ENCODE measurements at regions of chr4 and their contacts with region 1.

Region 1: DNA sequence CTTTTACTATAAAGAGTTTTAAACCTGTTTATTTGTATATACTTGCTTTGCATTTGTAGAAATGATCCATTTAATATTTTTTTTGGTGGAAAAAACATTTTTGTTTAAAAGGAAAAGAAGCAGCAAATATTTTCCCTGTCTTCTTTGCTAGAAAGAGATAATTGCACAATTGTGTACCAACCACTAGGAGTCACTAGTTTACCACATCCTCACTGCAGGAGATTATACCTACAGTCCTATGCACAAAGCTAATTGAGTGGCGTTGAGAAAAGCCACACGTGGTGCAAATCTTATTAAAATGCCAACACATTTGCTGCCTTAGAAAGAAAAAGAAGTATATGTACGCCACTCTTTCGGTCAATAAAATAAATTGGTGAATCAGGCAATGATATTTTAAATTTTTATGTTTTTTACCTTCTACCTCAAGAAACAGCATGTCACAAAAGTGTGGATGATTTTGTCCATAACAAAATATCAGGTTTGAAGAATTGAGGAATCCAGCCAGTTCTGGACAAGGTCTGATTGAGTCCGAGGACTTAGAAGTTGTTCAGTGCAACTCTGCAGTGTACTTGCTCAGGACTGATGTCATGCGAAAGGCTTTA is 102.9 kb downstream of the GRXCR1 start:
- DNase-seq: peak; percentile 49
- ATAC-seq: peak; percentile 63
- H3K4me3 ChIP-seq: no peak overlapping the region
- H3K27ac ChIP-seq: no peak overlapping the region
- H3K4me1 ChIP-seq: no peaks in the 10 kb centered on the region
- H3K27me3 ChIP-seq: no peaks in the 10 kb centered on the region
- CTCF ChIP-seq: peak; percentile 72

Region 2: GRCh38 chr4:43776371-43776770 is 780.9 kb after region 1 on chr4:
- CTCF ChIA-PET with region 1: interaction called, 5 read pairs
- POLR2A ChIA-PET with region 1: no interaction called
- intact Hi-C with region 1: loop called (anchors 5 kb)
- DNase-seq: peak; percentile 52
- ATAC-seq: no peak
- H3K4me3 ChIP-seq: no peak overlapping the region
- H3K27ac ChIP-seq: no peak overlapping the region
- H3K4me1 ChIP-seq: no peaks in the 10 kb centered on the region
- H3K27me3 ChIP-seq: no peaks in the 10 kb centered on the region
- CTCF ChIP-seq: peak; percentile 59